Mammary epithelial cell (primary cell): ENCODE measurements at regions of chr7 and their contacts with region 1.

Region 1: DNA sequence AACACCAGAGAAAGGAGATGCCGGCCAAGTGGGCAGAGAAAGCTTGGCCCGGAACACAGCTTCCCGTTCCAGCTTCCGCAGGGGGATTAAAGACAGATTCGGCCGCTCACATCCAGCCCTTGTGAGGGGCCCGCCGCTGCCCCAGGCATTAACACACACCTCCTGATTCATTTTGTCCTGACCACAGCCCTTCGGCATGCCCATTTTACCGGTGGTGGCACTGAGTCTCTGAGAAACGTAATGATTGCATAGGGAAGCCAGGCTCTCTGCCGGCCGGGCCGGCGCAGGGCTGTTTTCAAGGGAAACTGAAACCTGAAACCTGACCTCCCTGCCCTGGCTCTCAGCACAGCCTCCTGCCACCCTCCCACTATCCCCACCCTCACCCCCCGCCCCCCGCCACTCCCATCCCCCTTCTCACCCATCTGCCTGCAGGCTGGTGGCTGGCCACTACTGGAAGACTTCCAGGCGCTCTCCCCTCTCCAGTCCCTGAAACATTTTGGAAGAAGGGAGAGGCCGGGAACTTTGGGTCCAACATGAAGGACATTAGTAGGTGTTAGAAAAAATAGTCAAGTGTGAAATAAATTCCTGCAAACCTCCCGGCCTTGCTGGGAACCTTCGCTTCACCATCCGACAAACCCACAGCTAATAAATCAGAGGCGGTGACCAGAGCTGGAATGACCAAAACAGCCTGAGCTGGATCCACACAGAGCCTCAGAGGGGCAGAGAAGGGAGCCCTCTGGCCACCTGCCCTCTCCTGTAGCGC is 83.5 kb upstream of the CUX1 start:
- DNase-seq: no peak
- H3K4me3 ChIP-seq: peak overlapping the region in 1 of 3 experiments; percentile 11
- H3K27ac ChIP-seq: no peak overlapping the region
- H3K4me1 ChIP-seq: no peaks in the 10 kb centered on the region
- H3K27me3 ChIP-seq: no peaks in the 10 kb centered on the region
- CTCF ChIP-seq: no peak

Region 2: GRCh38 chr7:101823096-101823495 is 89.2 kb after region 1 on chr7:
- CTCF ChIA-PET with region 1: no interaction called
- dilution Hi-C with region 1: loop called (anchors 5 kb)
- in situ Hi-C with region 1: no loop called
- intact Hi-C with region 1: no loop called
- DNase-seq: no peak
- H3K4me3 ChIP-seq: no peak overlapping the region
- H3K27ac ChIP-seq: no peak overlapping the region
- H3K4me1 ChIP-seq: no peaks in the 10 kb centered on the region
- H3K27me3 ChIP-seq: no peaks in the 10 kb centered on the region
- CTCF ChIP-seq: no peak